ENCODE measurements at regions of chr14 and their contacts with region 1.

Region 1: DNA sequence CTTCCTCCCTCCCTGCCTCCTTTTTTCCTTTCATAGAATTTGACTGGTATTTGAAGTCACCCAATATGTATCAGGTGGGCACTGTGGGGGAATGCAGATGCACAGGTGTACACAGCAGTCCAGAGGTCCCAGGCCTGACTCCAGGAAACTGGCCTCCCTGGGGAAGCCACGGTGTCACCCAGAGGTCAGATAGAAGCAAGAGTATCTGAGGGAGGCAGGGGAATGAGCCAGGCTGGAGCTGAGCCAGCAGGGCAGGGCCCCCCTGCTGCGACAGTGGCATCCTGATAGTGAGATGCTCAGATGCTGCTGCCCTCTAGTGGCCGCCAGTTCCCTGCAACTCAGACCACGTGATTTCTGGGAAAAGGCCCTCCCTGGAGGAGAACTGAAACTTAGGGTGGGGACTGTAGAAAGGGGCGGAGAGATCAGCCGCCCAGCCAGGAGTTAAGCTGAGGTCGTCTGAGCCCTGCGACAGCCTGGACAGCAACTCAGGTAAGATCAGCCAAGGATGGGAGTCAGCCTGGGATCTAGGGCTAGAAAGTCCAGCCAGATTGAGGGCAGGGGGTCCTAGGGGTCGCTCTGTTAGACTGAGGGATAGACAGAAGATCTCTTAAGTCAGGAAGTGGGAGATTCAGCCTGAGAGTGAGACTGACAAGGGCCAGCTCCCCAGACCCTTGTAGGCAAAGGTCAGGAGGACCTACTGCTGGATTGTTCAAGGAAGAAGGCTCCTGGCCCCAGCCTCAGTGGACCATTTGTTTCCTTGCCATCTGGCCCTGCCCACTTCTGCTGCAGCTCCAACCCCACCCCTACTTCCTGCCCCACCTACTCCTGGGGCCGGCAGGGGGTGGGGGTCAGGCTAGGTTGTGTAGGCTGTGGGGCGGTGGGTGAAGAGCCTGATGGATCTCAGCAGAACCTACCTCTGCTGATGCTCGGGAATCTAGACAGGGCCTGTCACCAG is at the start of gene IRF9:
- DNase-seq: peak; percentile 99
- H3K4me3 Mint-ChIP-seq: peak within 1 kb of the TSS; percentile 100
- H3K27ac Mint-ChIP-seq: peak within 1 kb of the TSS; percentile 100
- H3K4me1 Mint-ChIP-seq: peaks cover 56% of the 10 kb centered on the region
- H3K27me3 Mint-ChIP-seq: no peaks in the 10 kb centered on the region
- total RNA-seq, gene IRF9: 262 to 267 TPM

Region 2: DNA sequence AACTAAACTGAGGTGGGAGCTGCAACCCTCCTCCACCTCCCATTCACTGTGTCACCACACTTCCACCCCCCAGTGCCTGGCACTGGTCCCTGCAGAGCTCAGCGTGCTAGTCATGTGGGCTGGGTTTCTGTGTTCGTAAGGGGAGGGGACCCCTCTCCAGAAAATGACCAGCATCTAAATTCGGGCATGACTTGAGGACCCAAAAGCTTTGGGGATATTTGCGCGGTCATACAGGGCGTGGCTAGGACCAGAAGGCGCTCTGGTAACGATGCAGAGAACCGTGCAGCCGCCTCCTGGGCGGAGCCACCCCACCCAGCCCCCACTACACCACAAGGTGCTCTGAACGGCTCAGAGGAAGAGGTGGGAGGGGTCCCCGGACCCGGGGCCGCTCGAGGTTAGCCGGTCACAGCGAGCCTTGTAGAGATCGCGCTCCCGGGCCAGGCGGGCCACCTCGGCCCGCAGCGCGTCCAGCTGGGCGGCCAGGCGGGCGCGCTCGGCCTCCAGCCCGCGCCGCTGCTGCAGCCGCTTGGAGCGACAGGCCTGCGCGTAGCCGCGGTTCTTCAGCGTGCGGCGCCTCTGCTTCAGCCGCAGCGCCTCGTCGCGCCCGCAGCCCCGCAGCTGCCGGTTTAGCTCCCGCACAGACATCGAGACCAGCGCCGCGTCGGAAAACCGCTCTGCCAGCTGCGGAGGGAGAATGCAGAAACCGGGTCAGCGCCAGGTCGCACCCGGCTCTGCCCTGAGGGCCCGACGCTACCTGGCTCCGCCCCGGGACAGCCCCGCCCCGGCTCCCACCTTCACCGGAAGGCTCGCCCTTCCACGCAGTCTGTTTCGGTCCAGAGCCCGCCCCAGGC is 80.0 kb before region 1 on chr14:
- CTCF ChIA-PET with region 1: interaction called, 8 read pairs
- POLR2A ChIA-PET with region 1: interaction called, 13 read pairs
- DNase-seq: peak; percentile 83
- H3K4me3 Mint-ChIP-seq: peak overlapping the region; percentile 74
- H3K27ac Mint-ChIP-seq: peak overlapping the region; percentile 75
- H3K4me1 Mint-ChIP-seq: peaks cover 32% of the 10 kb centered on the region
- H3K27me3 Mint-ChIP-seq: peaks cover 11% of the 10 kb centered on the region

Region 3: DNA sequence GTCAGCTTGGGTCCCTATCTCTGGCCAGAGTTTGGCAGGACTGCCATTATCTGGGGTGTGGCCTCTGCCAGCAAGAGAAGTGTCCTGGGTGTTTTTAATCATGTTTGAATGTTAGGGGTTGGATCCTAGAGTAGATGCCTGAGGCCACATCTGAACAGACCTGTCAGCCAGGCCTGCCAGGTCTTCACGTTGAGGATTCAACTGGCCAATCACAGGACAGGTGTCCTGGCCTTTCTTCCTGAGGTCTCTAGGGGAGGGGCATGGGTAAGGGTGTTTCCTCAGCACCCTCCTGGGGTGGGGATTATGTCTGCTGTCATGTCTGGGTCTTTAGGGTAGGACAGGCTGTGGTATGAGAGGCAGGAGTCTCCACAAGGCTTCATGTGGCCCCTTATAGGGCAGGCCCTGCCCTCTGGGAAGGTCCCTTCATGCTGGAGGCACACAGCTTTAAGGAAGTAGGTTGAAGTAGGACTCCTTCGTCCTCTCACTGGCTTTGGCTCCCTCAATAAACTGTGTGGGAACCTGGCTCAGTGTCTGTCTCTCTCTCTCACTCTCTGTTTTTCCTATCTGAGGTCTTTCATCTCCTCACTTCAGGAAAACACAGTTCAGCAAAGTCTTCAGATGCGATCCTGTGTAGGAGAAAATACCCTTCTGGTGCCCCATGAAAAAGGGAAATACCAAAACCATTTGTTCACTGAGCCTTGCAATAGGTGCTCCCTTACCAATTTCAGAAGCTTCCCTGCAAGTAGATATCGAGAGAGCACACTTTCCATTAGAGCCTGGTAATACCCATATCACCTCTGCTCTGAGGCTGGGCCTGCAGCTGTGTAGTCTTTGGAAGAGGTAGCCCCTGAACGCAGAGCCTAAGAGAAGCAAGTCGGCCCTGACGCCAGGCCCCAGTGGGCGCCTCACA is 37.4 kb before region 1 on chr14:
- CTCF ChIA-PET with region 1: interaction called, 4 read pairs
- POLR2A ChIA-PET with region 1: interaction called, 15 read pairs
- DNase-seq: no peak
- H3K4me3 Mint-ChIP-seq: no peak overlapping the region
- H3K27ac Mint-ChIP-seq: no peak overlapping the region
- H3K4me1 Mint-ChIP-seq: no peaks in the 10 kb centered on the region
- H3K27me3 Mint-ChIP-seq: no peaks in the 10 kb centered on the region

Region 4: DNA sequence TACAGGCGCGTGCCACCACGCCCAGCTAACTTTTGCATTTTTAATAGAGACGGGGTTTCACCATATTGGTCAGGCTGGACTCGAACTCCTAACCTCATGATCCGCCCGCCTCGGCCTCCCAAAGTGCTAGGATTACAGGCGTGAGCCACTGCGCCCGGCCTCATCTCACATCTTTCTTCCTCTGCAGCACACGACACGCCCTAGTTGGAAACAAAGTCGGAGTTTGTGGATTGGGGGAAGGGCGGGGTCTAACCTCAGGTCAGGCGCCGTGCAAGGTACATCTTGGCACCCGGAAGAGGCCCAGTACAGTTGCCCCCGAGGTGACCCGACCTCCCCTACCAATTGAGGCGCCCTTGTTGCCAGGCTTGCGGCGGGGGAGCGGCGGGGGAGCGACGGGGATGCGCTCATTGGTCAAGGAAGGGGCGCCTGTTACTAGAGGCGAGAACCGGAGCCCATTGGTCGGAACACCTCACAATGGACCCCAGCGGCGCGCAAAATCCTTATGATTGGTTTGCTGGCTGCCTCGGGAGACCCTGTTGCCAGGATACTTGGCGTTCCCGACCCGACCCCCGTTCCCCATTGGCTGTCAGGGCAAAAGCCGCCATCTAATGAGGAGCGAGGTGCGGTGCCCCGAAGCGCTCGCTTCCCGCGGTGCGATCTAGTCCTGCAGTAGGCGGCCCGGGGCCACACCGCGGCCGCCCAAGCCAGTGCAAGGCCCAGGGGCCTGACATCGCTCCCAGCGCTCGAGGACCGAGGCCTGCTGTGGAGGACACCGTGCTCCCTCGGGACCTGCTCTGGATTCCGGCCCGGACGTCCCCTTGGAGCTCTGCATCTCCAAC is 10.5 kb after region 1 on chr14 and contains the start of gene REC8:
- CTCF ChIA-PET with region 1: interaction called, 15 read pairs
- POLR2A ChIA-PET with region 1: interaction called, 456 read pairs
- DNase-seq: peak; percentile 74
- H3K4me3 Mint-ChIP-seq: peak within 1 kb of the TSS; percentile 67
- H3K27ac Mint-ChIP-seq: peak within 1 kb of the TSS; percentile 79
- H3K4me1 Mint-ChIP-seq: peaks cover 50% of the 10 kb centered on the region
- H3K27me3 Mint-ChIP-seq: no peaks in the 10 kb centered on the region
- total RNA-seq, gene REC8: 48.0 to 51.9 TPM

Region 5: GRCh38 chr14:24215495-24216344 is 54.6 kb after region 1 on chr14 and contains the start of gene MDP1:
- CTCF ChIA-PET with region 1: interaction called, 11 read pairs
- POLR2A ChIA-PET with region 1: interaction called, 45 read pairs
- DNase-seq: peak; percentile 92
- H3K4me3 Mint-ChIP-seq: peak within 1 kb of the TSS; percentile 88
- H3K27ac Mint-ChIP-seq: peak within 1 kb of the TSS; percentile 95
- H3K4me1 Mint-ChIP-seq: peaks cover 64% of the 10 kb centered on the region
- H3K27me3 Mint-ChIP-seq: no peaks in the 10 kb centered on the region
- total RNA-seq, gene MDP1: 13.5 to 17.0 TPM

Region 6: GRCh38 chr14:24310646-24311604 is 149.8 kb after region 1 on chr14 and contains the start of gene LTB4R:
- CTCF ChIA-PET with region 1: interaction called, 12 read pairs
- POLR2A ChIA-PET with region 1: interaction called, 35 read pairs
- DNase-seq: peak; percentile 76
- H3K4me3 Mint-ChIP-seq: peak within 1 kb of the TSS; percentile 87
- H3K27ac Mint-ChIP-seq: peak within 1 kb of the TSS; percentile 96
- H3K4me1 Mint-ChIP-seq: peaks cover 75% of the 10 kb centered on the region
- H3K27me3 Mint-ChIP-seq: no peaks in the 10 kb centered on the region
- total RNA-seq, gene LTB4R: 36.1 to 37.9 TPM